ENCODE measurements at regions of chr2 and their contacts with region 1.

Region 1: GRCh38 chr2:38602732-38603401 is at the start of gene HNRNPLL:
- DNase-seq: peak; percentile 97 to 99 (median 98)
- ATAC-seq: peak; percentile 80
- H3K4me3 ChIP-seq: peak within 1 kb of the TSS; percentile 92
- H3K27ac ChIP-seq: peak within 1 kb of the TSS; percentile 92
- H3K4me1 ChIP-seq: peaks cover 7 to 34% of the 10 kb centered on the region in 2 experiments
- H3K27me3 ChIP-seq: no peaks in the 10 kb centered on the region
- CTCF ChIP-seq: peak in 2 of 3 experiments; percentile 17 to 33; a peak in 3 of 6 replicates
- EP300 ChIP-seq: peak; percentile 61; the same call in 1 of the 2 replicates
- POLR2A ChIP-seq: peak; percentile 92
- RAD21 ChIP-seq: no peak
- polyA plus RNA-seq, gene HNRNPLL: 19.8 to 24.7 TPM

Region 2: GRCh38 chr2:38590053-38590452 is 12.8 kb before region 1 on chr2:
- CTCF ChIA-PET with region 1: no interaction called
- POLR2A ChIA-PET with region 1: interaction called, 15 read pairs
- in situ Hi-C with region 1: no loop called
- intact Hi-C with region 1: no loop called
- DNase-seq: peak in 1 of 4 experiments; percentile 27
- ATAC-seq: peak; percentile 21; the same call in 1 of the 3 replicates
- H3K4me3 ChIP-seq: no peak overlapping the region
- H3K27ac ChIP-seq: no peak overlapping the region
- H3K4me1 ChIP-seq: peaks cover 0 to 5% of the 10 kb centered on the region in 2 experiments; a peak in 2 of 5 replicates
- H3K27me3 ChIP-seq: no peaks in the 10 kb centered on the region
- CTCF ChIP-seq: peak in 1 of 3 experiments; percentile 7; a peak in 2 of 6 replicates
- EP300 ChIP-seq: no peak
- POLR2A ChIP-seq: no peak
- RAD21 ChIP-seq: no peak

Region 3: DNA sequence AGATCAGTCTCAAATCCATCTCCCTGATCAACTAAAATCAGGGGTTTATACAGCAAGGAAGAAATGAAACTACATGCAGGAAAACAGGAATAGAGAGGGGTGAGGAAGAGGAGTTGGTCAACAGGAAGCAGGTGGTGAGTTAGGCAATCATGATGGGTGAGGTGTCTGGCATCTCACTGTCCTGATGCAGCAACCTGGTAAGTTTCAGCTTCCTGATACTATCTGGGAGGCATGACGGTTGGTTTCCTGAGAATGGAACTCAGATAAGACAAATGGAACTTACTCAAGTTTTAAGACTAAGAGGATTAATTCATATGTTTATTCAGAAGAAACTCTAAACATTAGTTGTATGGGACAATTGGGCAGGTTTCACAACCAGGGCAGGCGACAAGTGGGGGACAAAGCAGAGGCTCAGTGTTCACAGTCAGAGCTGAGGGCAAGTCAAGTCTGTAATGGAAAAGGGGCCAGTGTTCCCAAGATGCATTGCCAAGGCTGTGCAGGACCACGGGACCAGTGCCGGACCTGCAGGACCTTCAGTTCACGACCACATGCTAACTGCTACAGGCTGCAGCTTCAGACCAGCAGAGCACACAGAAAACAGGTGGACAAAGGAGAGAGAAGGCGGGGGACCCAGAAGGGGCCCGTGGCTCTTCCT is 45.4 kb after region 1 on chr2:
- CTCF ChIA-PET with region 1: no interaction called
- POLR2A ChIA-PET with region 1: interaction called, 3 read pairs
- in situ Hi-C with region 1: no loop called
- intact Hi-C with region 1: loop called (anchors 2 kb)
- DNase-seq: no peak
- ATAC-seq: no peak
- H3K4me3 ChIP-seq: no peak overlapping the region
- H3K27ac ChIP-seq: no peak overlapping the region; the same call in 2 of the 3 replicates
- H3K4me1 ChIP-seq: peaks cover 29 to 56% of the 10 kb centered on the region in 2 experiments
- H3K27me3 ChIP-seq: no peaks in the 10 kb centered on the region
- CTCF ChIP-seq: no peak
- EP300 ChIP-seq: peak; percentile 63
- POLR2A ChIP-seq: no peak
- RAD21 ChIP-seq: no peak

Region 4: GRCh38 chr2:38672445-38673391 is 69.9 kb after region 1 on chr2:
- CTCF ChIA-PET with region 1: no interaction called
- POLR2A ChIA-PET with region 1: interaction called, 3 read pairs
- in situ Hi-C with region 1: loop called (anchors 5 kb)
- intact Hi-C with region 1: no loop called
- DNase-seq: no peak
- ATAC-seq: no peak
- H3K4me3 ChIP-seq: no peak overlapping the region
- H3K27ac ChIP-seq: no peak overlapping the region
- H3K4me1 ChIP-seq: peaks cover 0 to 8% of the 10 kb centered on the region in 2 experiments; a peak in 2 of 5 replicates
- H3K27me3 ChIP-seq: no peaks in the 10 kb centered on the region
- CTCF ChIP-seq: no peak
- EP300 ChIP-seq: no peak
- POLR2A ChIP-seq: no peak
- RAD21 ChIP-seq: no peak